Panc1 (cell line): ENCODE measurements at regions of chr2 and their contacts with region 1.

Region 1: GRCh38 chr2:194735837-194736542 is 921.0 kb upstream of the SLC39A10 start:
- DNase-seq: no peak
- ATAC-seq: no peak
- H3K4me3 ChIP-seq: no peak overlapping the region
- H3K27ac ChIP-seq: no peak overlapping the region
- H3K4me1 ChIP-seq: no peaks in the 10 kb centered on the region
- H3K27me3 ChIP-seq: no peaks in the 10 kb centered on the region
- CTCF ChIP-seq: no peak

Region 2: DNA sequence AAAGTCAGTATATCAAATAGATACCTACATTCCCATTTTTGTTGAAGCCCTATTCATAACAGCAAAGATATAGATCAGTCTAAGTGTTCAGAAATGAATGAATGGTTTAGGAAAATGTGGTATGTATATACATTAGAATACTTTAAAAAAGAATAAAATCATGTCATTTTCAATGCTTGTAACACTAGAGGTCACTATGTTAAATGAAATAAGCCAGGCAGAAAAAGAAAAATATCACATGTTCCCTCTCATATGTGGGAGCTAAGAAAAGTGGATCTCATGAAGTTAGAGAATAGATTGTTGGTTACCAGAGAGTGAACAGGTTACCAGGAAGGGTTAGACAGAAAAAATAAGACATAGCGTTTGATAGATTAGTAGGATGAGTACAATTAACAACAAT is 190.0 kb before region 1 on chr2:
- CTCF ChIA-PET with region 1: interaction called, 12 read pairs
- POLR2A ChIA-PET with region 1: no interaction called
- in situ Hi-C with region 1: no loop called
- intact Hi-C with region 1: no loop called
- DNase-seq: no peak
- ATAC-seq: no peak
- H3K4me3 ChIP-seq: no peak overlapping the region
- H3K27ac ChIP-seq: no peak overlapping the region
- H3K4me1 ChIP-seq: no peaks in the 10 kb centered on the region
- H3K27me3 ChIP-seq: no peaks in the 10 kb centered on the region
- CTCF ChIP-seq: peak; percentile 21; the same call in 1 of the 2 replicates